ENCODE measurements at regions of chr6 and their contacts with region 1.

Region 1: DNA sequence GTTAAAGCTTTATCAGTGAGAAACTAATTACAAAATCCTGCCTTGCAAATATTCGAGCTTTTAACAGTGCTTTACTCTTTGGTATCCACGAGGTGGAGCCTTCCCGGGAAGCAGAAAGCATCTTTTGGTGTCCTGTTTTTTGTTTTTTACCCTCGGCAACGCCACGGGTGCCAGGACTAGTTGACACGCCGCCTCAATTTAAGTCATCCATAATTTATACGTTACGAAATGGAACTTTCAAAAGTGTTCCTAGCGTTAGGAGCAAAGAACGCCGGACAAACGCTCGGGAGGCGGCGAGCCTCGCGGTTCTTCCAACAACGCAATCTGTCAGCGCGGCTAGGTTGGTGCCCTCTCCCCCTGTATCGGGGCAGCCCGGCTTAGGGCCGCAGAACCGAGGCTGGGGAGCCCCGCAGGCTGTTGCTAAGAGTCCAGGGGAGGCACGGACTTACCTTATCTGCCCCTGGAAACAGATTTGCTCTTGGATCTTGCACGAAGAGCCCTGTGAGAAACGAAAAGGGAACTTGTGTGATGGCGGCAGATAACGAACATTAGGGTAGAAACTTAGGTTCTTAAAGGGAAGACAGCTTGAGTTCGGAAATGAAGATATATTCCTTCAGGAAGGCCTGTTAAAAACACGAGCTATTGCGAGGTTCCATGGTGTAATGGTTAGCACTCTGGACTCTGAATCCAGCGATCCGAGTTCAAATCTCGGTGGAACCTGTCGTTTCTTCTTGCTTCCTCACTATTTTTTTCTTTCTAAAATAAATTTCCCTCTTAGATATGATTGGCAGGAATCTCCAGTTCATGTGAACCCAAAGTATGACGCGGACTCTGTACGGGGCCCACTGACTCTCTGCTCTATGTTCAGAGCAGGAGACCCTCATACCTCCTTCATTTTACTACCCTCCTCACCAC is 46.2 kb upstream of the ZNF184 start:
- DNase-seq: peak; percentile 67
- ATAC-seq: peak; percentile 91
- H3K4me3 Mint-ChIP-seq: peak overlapping the region; percentile 94
- H3K27ac Mint-ChIP-seq: peak overlapping the region; percentile 84
- H3K4me1 Mint-ChIP-seq: peaks cover 9% of the 10 kb centered on the region
- H3K27me3 Mint-ChIP-seq: peaks cover 31% of the 10 kb centered on the region
- CTCF ChIP-seq: peak; percentile 66

Region 2: GRCh38 chr6:27295301-27296081 is 223.6 kb before region 1 on chr6:
- CTCF ChIA-PET with region 1: interaction called, 10 read pairs
- POLR2A ChIA-PET with region 1: no interaction called
- DNase-seq: peak; percentile 41
- ATAC-seq: peak; percentile 46
- H3K4me3 Mint-ChIP-seq: peak overlapping the region; percentile 93
- H3K27ac Mint-ChIP-seq: no peak overlapping the region
- H3K4me1 Mint-ChIP-seq: peaks cover 35% of the 10 kb centered on the region
- H3K27me3 Mint-ChIP-seq: peaks cover 29% of the 10 kb centered on the region
- CTCF ChIP-seq: no peak

Region 3: DNA sequence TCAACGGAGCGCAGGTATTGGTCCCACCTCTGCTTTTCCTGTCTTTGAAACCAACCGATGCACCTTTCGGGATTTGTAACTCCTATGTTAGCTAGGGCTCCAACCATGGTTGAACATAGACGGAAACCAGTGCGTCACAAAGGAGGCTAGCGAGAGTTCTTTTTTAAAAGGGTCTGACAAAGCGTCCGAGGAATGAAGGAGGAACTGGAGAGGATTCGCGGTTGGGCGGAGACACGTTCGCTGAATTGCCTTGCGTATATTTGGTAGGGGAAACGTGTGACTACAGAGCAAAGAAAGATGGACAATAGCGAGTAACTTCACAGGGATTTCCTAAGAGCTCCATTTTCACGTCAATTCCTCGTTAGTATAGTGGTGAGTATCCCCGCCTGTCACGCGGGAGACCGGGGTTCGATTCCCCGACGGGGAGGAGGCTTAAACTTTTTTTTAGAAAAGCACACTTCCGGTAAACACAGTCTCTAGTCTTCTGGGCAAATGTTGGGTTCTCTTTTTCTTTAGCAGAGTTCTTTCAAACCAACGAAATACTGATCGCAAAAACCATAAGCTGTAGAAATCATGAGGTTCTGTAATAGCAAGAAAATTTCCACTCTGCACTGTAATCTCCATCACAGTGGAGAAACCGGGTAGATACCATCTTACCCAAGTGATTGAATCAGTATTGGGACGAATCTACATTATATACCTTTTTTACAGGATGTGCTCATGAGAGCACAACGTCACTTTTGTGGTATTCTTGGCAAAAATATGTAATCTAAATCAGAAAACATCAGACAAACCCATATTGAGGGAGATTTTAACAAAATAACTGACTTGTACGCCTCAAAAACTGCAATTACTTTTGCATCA is 39.6 kb before region 1 on chr6:
- CTCF ChIA-PET with region 1: no interaction called
- POLR2A ChIA-PET with region 1: no interaction called
- DNase-seq: peak; percentile 77
- ATAC-seq: peak; percentile 62
- H3K4me3 Mint-ChIP-seq: no peak overlapping the region
- H3K27ac Mint-ChIP-seq: no peak overlapping the region
- H3K4me1 Mint-ChIP-seq: peaks cover 14% of the 10 kb centered on the region
- H3K27me3 Mint-ChIP-seq: peaks cover 3% of the 10 kb centered on the region; the same call in 1 of the 2 replicates
- CTCF ChIP-seq: no peak

Region 4: DNA sequence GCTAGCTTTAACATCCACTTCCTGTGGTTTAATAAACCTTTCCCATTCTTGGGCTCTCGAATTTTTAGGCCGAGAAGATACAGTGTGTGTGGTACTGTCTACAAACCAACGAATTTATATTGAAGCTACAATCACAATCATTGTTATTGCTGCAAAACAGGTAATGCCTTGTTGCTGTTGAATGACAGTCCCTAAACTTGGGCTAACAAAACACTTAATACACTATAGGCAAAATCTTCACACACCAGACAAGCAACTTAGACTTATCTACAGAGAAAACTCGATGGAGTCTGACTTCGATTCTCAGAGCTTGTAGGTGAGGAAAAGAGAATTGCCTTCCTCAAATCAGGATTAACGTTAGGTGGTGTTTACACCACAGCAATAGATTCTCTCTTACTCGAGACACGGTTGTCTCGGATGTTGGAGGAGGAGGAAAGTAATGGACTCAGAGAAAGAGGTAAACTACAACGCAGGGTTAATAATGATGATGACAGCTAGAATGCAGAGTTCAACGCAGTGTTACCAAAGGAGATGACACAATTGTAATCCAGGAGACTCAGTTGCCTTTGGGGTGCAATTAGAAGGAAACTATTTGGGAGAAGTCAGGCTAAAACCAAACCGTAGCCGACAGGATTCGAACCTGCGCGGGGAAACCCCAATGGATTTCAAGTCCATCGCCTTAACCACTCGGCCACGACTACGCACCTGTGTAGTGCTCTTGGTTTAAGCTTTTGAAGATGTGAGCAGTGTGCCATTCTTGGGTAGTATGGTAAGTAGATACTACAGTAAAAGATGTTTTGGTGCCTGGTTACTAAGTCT is 13.7 kb before region 1 on chr6:
- CTCF ChIA-PET with region 1: interaction called, 16 read pairs
- POLR2A ChIA-PET with region 1: no interaction called
- DNase-seq: peak; percentile 91
- ATAC-seq: peak; percentile 87
- H3K4me3 Mint-ChIP-seq: peak overlapping the region; percentile 50
- H3K27ac Mint-ChIP-seq: peak overlapping the region; percentile 36
- H3K4me1 Mint-ChIP-seq: peaks cover 26% of the 10 kb centered on the region
- H3K27me3 Mint-ChIP-seq: peaks cover 8% of the 10 kb centered on the region; the same call in 1 of the 2 replicates
- CTCF ChIP-seq: no peak

Region 5: GRCh38 chr6:27582928-27583725 is 64.0 kb after region 1 on chr6:
- CTCF ChIA-PET with region 1: no interaction called
- POLR2A ChIA-PET with region 1: no interaction called
- DNase-seq: peak; percentile 76
- ATAC-seq: peak; percentile 83
- H3K4me3 Mint-ChIP-seq: peak overlapping the region; percentile 86
- H3K27ac Mint-ChIP-seq: peak overlapping the region; percentile 66; the same call in 1 of the 2 replicates
- H3K4me1 Mint-ChIP-seq: peaks cover 9% of the 10 kb centered on the region
- H3K27me3 Mint-ChIP-seq: peaks cover 4% of the 10 kb centered on the region
- CTCF ChIP-seq: no peak

Region 6: DNA sequence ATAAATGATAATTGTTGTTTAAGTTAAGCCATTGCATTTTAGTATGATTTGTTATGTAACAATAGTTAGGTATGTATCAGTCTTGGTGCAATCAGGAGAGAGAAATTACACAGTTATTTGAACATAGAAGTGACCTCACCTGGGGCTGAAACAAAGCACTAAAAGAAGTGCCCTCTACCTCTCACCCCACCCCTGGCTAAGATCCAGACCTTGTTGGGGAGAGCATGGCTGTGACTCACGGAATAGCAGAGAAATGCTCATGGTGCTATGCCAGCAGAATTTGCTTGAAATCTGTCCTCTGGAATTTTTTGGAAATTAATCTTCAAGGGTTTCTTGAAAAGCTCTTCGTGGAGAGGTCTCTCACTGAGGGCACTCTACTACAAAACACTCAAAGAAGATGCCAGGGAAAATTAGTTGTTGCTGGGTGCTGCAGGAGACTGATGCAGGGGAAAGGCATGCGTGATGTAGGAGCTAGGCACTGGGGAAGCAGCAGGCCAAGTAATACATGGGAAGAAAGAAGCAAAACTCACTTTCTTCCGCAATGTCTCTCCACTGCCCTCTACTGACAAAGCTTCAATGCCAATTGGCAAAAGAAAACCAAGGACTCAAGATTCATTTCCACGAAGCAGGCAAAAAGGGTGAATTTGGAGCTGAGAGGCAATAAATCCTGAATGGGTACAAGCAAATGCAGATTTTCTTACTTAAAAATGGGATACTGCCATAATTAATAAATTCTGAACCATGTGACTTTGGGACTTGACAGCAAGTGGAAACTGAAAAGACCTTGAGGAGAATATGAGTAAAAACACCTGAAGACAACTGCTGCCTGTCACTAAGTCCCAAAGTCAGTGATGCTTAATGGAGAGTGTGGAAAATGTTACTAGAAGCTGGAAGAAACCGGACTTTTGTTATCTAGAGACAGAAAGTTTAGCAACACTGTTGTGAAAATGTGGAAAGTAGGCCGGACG is 90.1 kb after region 1 on chr6:
- CTCF ChIA-PET with region 1: interaction called, 13 read pairs
- POLR2A ChIA-PET with region 1: no interaction called
- DNase-seq: no peak
- ATAC-seq: peak; percentile 40
- H3K4me3 Mint-ChIP-seq: no peak overlapping the region
- H3K27ac Mint-ChIP-seq: 0 out of 2 replicates have a peak overlapping the region, but pooled peaks have one; percentile 22
- H3K4me1 Mint-ChIP-seq: peaks cover 8% of the 10 kb centered on the region
- H3K27me3 Mint-ChIP-seq: peaks cover 20% of the 10 kb centered on the region
- CTCF ChIP-seq: peak; percentile 24; the same call in 1 of the 2 replicates

Region 7: DNA sequence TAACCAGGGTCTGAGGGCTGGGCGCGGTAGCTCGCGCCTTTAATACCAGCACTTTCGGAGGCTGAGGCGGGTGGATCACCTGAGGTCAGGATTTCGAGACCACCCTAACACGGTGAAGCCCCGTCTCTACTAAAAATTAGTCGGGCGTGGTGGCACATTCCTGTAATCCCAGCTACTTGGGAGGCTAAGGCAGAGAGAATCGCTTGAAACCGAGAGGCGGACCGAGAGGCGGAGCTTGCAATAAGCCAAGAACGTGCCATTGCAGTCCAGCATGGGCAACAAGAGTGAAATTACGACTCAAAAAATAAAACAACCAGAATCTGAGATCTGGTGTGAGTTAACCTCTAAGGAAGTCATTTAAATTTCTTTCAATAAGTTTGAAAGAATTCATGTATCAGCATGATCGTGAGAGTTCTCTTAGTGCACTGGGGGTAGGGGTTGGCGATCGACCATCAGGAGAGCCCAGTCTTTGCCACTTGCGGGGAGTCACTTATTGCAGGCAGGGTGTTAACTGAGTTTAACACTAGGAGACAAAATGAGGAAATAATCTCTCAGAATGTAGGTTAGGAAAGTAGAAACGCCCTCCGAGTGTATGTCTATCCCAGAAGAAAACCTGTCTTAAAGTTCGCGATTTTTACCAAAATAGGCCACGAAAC is 160.3 kb after region 1 on chr6:
- CTCF ChIA-PET with region 1: no interaction called
- POLR2A ChIA-PET with region 1: no interaction called
- DNase-seq: no peak
- ATAC-seq: peak; percentile 4; the same call in 1 of the 2 replicates
- H3K4me3 Mint-ChIP-seq: peak overlapping the region; percentile 83
- H3K27ac Mint-ChIP-seq: no peak overlapping the region
- H3K4me1 Mint-ChIP-seq: peaks cover 10% of the 10 kb centered on the region
- H3K27me3 Mint-ChIP-seq: peaks cover 74% of the 10 kb centered on the region
- CTCF ChIP-seq: no peak

Region 8: GRCh38 chr6:27772261-27773001 is 253.3 kb after region 1 on chr6:
- CTCF ChIA-PET with region 1: interaction called, 11 read pairs
- POLR2A ChIA-PET with region 1: no interaction called
- DNase-seq: peak; percentile 89
- ATAC-seq: peak; percentile 82
- H3K4me3 Mint-ChIP-seq: peak overlapping the region; percentile 59
- H3K27ac Mint-ChIP-seq: no peak overlapping the region; the same call in 1 of the 2 replicates
- H3K4me1 Mint-ChIP-seq: peaks cover 35% of the 10 kb centered on the region
- H3K27me3 Mint-ChIP-seq: peaks cover 100% of the 10 kb centered on the region
- CTCF ChIP-seq: peak; percentile 87

Measured in WTC11 (cell line).